IMR-90 (cell line): ENCODE measurements at regions of chr4 and their contacts with region 1.

Region 1: DNA sequence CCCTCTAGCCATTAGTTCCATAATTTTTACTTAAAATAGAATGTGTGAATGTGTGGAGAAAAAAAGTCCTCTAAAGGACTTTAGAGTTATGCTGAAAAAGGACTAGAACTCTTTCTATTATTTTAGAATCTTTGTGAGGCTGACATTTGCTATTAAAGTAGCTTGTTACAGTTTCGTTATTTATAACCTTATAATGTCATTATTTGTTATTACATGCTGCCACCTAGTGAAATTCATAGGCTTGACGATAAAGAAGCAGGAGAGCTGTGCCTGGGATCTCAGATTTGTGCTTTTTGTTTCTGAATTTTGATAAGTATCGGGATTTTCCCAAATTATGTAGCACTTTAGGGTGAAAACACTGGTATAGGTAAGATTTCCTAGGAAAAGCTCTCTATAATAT is 38.5 kb upstream of the TAPT1 start:
- DNase-seq: peak; percentile 58
- ATAC-seq: peak; percentile 82
- H3K4me3 ChIP-seq: no peak overlapping the region
- H3K27ac ChIP-seq: no peak overlapping the region
- H3K4me1 ChIP-seq: no peaks in the 10 kb centered on the region
- H3K27me3 ChIP-seq: peaks cover 7% of the 10 kb centered on the region
- CTCF ChIP-seq: peak; percentile 66
- POLR2A ChIP-seq: no peak
- RAD21 ChIP-seq: peak; percentile 72

Region 2: GRCh38 chr4:15805583-15806517 is 458.9 kb before region 1 on chr4:
- CTCF ChIA-PET with region 1: interaction called, 3 read pairs
- POLR2A ChIA-PET with region 1: no interaction called
- dilution Hi-C with region 1: no loop called
- in situ Hi-C with region 1: no loop called
- intact Hi-C with region 1: loop called (anchors 10 kb)
- DNase-seq: peak; percentile 63
- ATAC-seq: peak; percentile 84
- H3K4me3 ChIP-seq: no peak overlapping the region
- H3K27ac ChIP-seq: no peak overlapping the region
- H3K4me1 ChIP-seq: no peaks in the 10 kb centered on the region
- H3K27me3 ChIP-seq: peaks cover 27% of the 10 kb centered on the region
- CTCF ChIP-seq: peak; percentile 83
- POLR2A ChIP-seq: no peak
- RAD21 ChIP-seq: peak; percentile 84

Region 3: DNA sequence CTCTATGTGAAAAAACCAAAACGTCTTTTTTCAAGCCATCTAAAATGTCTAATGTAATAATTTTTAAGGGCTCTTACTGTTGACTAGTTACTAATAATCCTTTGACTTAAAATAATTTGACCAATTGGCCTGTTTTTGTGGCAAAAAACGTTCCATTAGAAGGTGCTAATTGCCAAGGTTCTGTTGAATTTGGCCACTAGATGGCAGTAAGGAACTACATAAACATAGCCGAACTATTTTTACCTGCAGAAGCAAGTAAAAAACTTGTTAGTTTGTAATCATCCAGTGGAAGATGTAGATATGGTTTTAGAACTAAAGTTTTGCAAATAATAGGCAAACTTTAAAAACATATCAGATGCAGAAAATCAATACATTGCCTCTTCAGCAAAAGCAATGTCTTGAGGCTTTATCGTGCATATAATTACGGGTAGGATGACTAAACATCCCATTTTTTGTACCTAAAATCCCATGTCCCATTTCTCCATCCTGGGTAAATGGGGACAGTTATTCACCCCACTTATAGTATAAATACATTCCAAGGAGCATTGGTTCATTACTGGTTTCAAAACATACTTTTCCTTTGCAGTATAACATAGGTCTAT is 238.5 kb before region 1 on chr4:
- CTCF ChIA-PET with region 1: interaction called, 5 read pairs
- POLR2A ChIA-PET with region 1: no interaction called
- dilution Hi-C with region 1: no loop called
- in situ Hi-C with region 1: loop called (anchors 5 kb)
- intact Hi-C with region 1: loop called (anchors 1 kb)
- DNase-seq: peak; percentile 61
- ATAC-seq: no peak
- H3K4me3 ChIP-seq: no peak overlapping the region
- H3K27ac ChIP-seq: no peak overlapping the region
- H3K4me1 ChIP-seq: no peaks in the 10 kb centered on the region; the same call in 1 of the 2 replicates
- H3K27me3 ChIP-seq: peaks cover 29% of the 10 kb centered on the region
- CTCF ChIP-seq: peak; percentile 83
- POLR2A ChIP-seq: no peak
- RAD21 ChIP-seq: peak; percentile 77

Region 4: GRCh38 chr4:16034010-16034829 is 230.6 kb before region 1 on chr4:
- CTCF ChIA-PET with region 1: interaction called, 5 read pairs
- POLR2A ChIA-PET with region 1: no interaction called
- dilution Hi-C with region 1: no loop called
- in situ Hi-C with region 1: loop called (anchors 5 kb)
- intact Hi-C with region 1: no loop called
- DNase-seq: peak; percentile 47
- ATAC-seq: peak; percentile 63
- H3K4me3 ChIP-seq: no peak overlapping the region
- H3K27ac ChIP-seq: peak overlapping the region; percentile 30; the same call in 1 of the 2 replicates
- H3K4me1 ChIP-seq: peaks cover 4% of the 10 kb centered on the region; the same call in 1 of the 2 replicates
- H3K27me3 ChIP-seq: no peaks in the 10 kb centered on the region
- CTCF ChIP-seq: no peak
- POLR2A ChIP-seq: no peak
- RAD21 ChIP-seq: no peak

Region 5: GRCh38 chr4:16196478-16197393 is 68.1 kb before region 1 on chr4:
- CTCF ChIA-PET with region 1: interaction called, 8 read pairs
- POLR2A ChIA-PET with region 1: no interaction called
- dilution Hi-C with region 1: no loop called
- in situ Hi-C with region 1: no loop called
- intact Hi-C with region 1: loop called (anchors 2 kb)
- DNase-seq: peak; percentile 65
- ATAC-seq: peak; percentile 93
- H3K4me3 ChIP-seq: peak overlapping the region; percentile 18; the same call in 1 of the 2 replicates
- H3K27ac ChIP-seq: no peak overlapping the region
- H3K4me1 ChIP-seq: no peaks in the 10 kb centered on the region
- H3K27me3 ChIP-seq: no peaks in the 10 kb centered on the region
- CTCF ChIP-seq: peak; percentile 48
- POLR2A ChIP-seq: no peak
- RAD21 ChIP-seq: peak; percentile 21; the same call in 1 of the 2 replicates

Region 6: GRCh38 chr4:16225863-16226815 is 38.7 kb before region 1 on chr4 and contains the start of gene TAPT1:
- CTCF ChIA-PET with region 1: no interaction called
- POLR2A ChIA-PET with region 1: no interaction called
- dilution Hi-C with region 1: no loop called
- in situ Hi-C with region 1: no loop called
- intact Hi-C with region 1: loop called (anchors 5 kb)
- DNase-seq: peak; percentile 30
- ATAC-seq: peak; percentile 91
- H3K4me3 ChIP-seq: peak within 1 kb of the TSS; percentile 96
- H3K27ac ChIP-seq: peak within 1 kb of the TSS; percentile 69
- H3K4me1 ChIP-seq: no peaks in the 10 kb centered on the region; the same call in 1 of the 2 replicates
- H3K27me3 ChIP-seq: no peaks in the 10 kb centered on the region
- CTCF ChIP-seq: no peak
- POLR2A ChIP-seq: 0 out of 2 replicates have a peak, but pooled peaks have one; percentile 43
- RAD21 ChIP-seq: no peak
- total RNA-seq, gene TAPT1: 12.2 and 12.8 TPM in 2 replicates

Region 7: GRCh38 chr4:16310606-16311005 is 45.8 kb after region 1 on chr4:
- CTCF ChIA-PET with region 1: no interaction called
- POLR2A ChIA-PET with region 1: no interaction called
- dilution Hi-C with region 1: no loop called
- in situ Hi-C with region 1: no loop called
- intact Hi-C with region 1: no loop called
- DNase-seq: no peak
- ATAC-seq: no peak
- H3K4me3 ChIP-seq: no peak overlapping the region
- H3K27ac ChIP-seq: no peak overlapping the region
- H3K4me1 ChIP-seq: no peaks in the 10 kb centered on the region
- H3K27me3 ChIP-seq: peaks cover 2% of the 10 kb centered on the region; the same call in 1 of the 2 replicates
- CTCF ChIP-seq: no peak
- POLR2A ChIP-seq: no peak
- RAD21 ChIP-seq: no peak